ENCODE measurements at regions of chr9 and their contacts with region 1.

Region 1: DNA sequence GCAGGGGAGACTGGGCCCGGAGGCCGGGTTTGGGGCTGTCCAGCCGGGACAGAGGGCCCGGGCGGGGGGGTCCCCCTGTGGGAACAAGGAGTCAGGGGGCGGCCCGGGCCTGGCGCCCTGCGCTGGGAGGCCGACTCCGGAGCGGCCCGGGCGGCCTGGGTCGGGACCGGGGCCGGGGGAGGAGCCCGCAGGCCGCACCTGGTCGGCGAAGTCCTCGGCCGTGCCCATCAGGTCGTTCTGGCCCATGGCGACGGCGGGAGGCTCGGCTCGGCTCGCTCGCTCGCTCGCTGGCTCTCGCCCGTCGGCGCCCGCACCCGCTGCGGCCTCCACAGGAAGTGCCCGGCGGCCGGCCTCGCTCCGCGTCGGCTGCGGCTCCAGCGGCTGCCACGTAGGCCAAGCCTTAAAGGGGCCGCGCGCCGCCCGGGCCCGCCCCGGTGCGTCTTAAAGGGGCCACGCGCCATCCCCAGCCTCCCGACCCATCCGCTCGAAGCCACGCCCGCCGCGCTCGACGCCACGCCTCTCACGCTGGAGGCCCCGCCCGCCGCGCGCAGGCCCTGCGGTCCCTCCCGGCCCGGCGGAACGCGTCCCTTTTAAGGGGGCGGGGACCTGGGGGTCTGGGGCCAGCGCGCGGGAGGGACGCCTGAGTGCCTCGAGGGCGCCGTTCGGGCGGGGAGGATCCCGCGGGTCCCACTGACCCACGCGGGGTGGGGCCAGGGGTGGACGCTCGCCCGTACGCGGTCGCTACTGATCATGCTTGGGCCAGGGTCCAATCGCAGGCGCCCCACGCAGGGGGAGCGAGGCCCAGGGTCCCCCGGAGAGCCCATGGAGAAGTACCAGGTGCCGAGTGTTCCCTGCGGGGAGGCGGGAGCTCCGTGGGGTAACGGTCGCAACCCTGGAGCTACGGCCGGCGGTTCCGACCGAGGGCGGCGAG is at the starts of genes STKLD1 and SURF4:
- DNase-seq: peak; percentile 99

Region 2: GRCh38 chr9:133347985-133348717 is 27.8 kb before region 1 on chr9 and contains the starts of genes MED22 and RPL7A:
- CTCF ChIA-PET with region 1: interaction called, 3 read pairs
- POLR2A ChIA-PET with region 1: interaction called, 15 read pairs
- DNase-seq: peak; percentile 82

Region 3: GRCh38 chr9:133406480-133407307 is 30.7 kb after region 1 on chr9:
- CTCF ChIA-PET with region 1: no interaction called
- POLR2A ChIA-PET with region 1: no interaction called
- DNase-seq: peak; percentile 89